H1 (cell line): ENCODE measurements at regions of chr5 and their contacts with region 1.

Region 1: GRCh38 chr5:127602481-127602880 is 46.4 kb upstream of the CTXN3 start:
- DNase-seq: peak in 1 of 2 experiments; percentile 35
- H3K4me3 ChIP-seq: no peak overlapping the region
- H3K27ac ChIP-seq: no peak overlapping the region
- H3K4me1 ChIP-seq: peaks cover 0 to 8% (median 0%) of the 10 kb centered on the region in 4 experiments; a peak in 1 of 7 replicates
- H3K27me3 ChIP-seq: no peaks in the 10 kb centered on the region
- CTCF ChIP-seq: peak in 2 of 3 experiments; percentile 7 to 42; a peak in 3 of 4 replicates
- EP300 ChIP-seq: no peak
- POLR2A ChIP-seq: no peak
- RAD21 ChIP-seq: peak in 1 of 2 experiments; percentile 20; a peak in 1 of 4 replicates

Region 2: GRCh38 chr5:127612441-127613141 is 10.1 kb after region 1 on chr5:
- CTCF ChIA-PET with region 1: interaction called, 11 read pairs
- POLR2A ChIA-PET with region 1: no interaction called
- DNase-seq: peak in 1 of 2 experiments; percentile 22
- H3K4me3 ChIP-seq: no peak overlapping the region
- H3K27ac ChIP-seq: no peak overlapping the region
- H3K4me1 ChIP-seq: no peaks in the 10 kb centered on the region
- H3K27me3 ChIP-seq: peaks cover 0 to 1% (median 0%) of the 10 kb centered on the region in 4 experiments; a peak in 1 of 7 replicates
- CTCF ChIP-seq: no peak
- EP300 ChIP-seq: no peak
- POLR2A ChIP-seq: no peak
- RAD21 ChIP-seq: no peak